ENCODE measurements at regions of chr13 and their contacts with region 1.

Region 1: DNA sequence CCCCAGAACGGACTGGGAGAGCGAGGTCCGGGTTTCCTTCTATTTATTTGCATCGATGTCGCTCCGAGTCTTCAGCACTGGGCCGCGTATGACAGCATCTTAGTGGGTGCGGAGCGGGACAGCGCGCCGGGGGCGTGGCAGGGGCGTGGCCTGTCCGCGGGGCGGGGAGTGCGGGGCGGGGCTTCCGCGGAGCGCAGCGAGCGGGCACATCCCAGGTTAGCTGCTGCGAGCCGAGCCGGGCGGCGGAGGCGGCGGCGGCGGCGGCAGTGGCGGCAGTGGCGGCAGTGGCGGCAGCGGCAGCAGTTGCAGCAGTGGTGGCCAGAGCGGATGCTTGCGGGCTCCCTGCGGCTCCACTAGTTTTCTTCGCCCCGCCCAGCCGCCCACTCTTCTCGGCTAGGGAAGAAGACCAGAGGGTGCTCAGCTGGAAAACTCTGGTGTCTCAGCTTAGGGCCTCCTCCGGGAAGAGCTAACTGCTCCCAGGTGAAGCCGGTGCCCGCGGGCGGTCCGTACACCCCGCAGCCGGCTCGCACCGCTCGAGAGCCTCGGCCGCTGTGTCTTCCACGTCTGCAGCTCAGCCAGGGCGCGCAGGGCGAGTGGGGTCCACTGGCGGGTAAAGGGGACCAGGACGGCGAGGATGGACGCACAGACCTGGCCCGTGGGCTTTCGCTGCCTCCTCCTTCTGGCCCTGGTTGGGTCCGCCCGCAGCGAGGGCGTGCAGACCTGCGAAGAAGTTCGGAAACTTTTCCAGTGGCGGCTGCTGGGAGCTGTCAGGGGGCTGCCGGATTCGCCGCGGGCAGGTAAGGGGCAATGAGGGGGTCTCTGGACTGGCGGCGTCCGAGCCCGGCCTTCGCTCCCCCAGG is at the start of gene GPC5:
- DNase-seq: peak; percentile 69 to 91 (median 76)
- ATAC-seq: peak; percentile 99
- H3K4me3 ChIP-seq: peak within 1 kb of the TSS; percentile 60
- H3K4me3 Mint-ChIP-seq: peak within 1 kb of the TSS; percentile 83
- H3K27ac ChIP-seq: no peak within 1 kb of the TSS
- H3K27ac Mint-ChIP-seq: no peak within 1 kb of the TSS
- H3K4me1 ChIP-seq: peaks cover 17% of the 10 kb centered on the region
- H3K4me1 Mint-ChIP-seq: peaks cover 19% of the 10 kb centered on the region
- H3K27me3 ChIP-seq: peaks cover 25 to 36% of the 10 kb centered on the region in 2 experiments
- H3K27me3 Mint-ChIP-seq: peaks cover 61% of the 10 kb centered on the region
- CTCF ChIP-seq: no peak
- total RNA-seq, gene GPC5: not detected

Region 2: DNA sequence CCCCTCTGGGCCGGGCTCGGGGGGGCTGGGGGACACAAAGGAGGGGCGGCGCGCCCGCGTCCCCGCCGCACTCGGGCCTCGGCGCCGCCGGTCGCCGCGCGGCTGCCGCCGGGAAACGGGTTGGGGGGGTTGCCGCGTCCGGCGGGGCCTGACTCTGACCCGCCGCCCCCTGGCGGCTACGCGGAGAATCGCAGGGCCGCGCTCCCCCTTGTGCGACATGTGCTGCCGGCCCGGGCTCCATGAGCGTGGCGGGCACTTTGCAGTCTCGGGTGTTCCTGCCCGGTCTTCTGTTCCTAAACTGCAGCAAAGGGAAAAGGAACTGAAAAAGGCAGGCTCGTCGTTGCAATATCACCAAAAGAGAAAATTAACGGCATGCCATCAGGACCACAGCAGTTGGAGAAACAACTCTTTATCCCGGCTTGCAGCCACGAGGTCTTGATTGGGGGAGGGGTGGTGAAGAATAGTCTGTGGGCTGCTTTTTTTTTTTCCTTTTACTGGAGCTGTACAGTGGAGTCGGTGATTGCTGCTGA is 49.7 kb before region 1 on chr13:
- CTCF ChIA-PET with region 1: no interaction called
- POLR2A ChIA-PET with region 1: interaction called, 9 read pairs
- intact Hi-C with region 1: loop called (anchors 2 kb)
- DNase-seq: peak; percentile 81 to 95 (median 89)
- ATAC-seq: peak; percentile 58
- H3K4me3 ChIP-seq: peak overlapping the region; percentile 60
- H3K4me3 Mint-ChIP-seq: peak overlapping the region; percentile 92
- H3K27ac ChIP-seq: no peak overlapping the region
- H3K27ac Mint-ChIP-seq: peak overlapping the region; percentile 82
- H3K4me1 ChIP-seq: peaks cover 16% of the 10 kb centered on the region
- H3K4me1 Mint-ChIP-seq: peaks cover 47% of the 10 kb centered on the region
- H3K27me3 ChIP-seq: no peaks in the 10 kb centered on the region
- H3K27me3 Mint-ChIP-seq: no peaks in the 10 kb centered on the region
- CTCF ChIP-seq: peak; percentile 79